Activated T-helper 2 cell treated with anti-CD3 and anti-CD28 coated beads, Interferon-gamma antibody, Interleukin-2, Interleukin-4, amounts not matched to agents 10 μg/mL and 5 μg/mL and 100 μg/mL, durations not matched to agents 14 hours and 24 hours and 36 hours (primary cell): ENCODE measurements at regions of chr5 and their contacts with region 1.

Region 1: GRCh38 chr5:102296178-102296817 is at the start of gene SLCO4C1:
- DNase-seq: peak; percentile 63
- H3K4me3 Mint-ChIP-seq: peak within 1 kb of the TSS; percentile 81
- H3K27ac Mint-ChIP-seq: peak within 1 kb of the TSS; percentile 70
- H3K4me1 Mint-ChIP-seq: peaks cover 24% of the 10 kb centered on the region
- H3K27me3 Mint-ChIP-seq: peaks cover 9% of the 10 kb centered on the region
- total RNA-seq, gene SLCO4C1: 0.50 and 0.57 TPM in 2 replicates

Region 2: GRCh38 chr5:102231693-102232619 is 64.3 kb before region 1 on chr5:
- intact Hi-C with region 1: loop called (anchors 5 kb)
- DNase-seq: no peak
- H3K4me3 Mint-ChIP-seq: no peak overlapping the region
- H3K27ac Mint-ChIP-seq: no peak overlapping the region
- H3K4me1 Mint-ChIP-seq: peaks cover 22% of the 10 kb centered on the region
- H3K27me3 Mint-ChIP-seq: peaks cover 8% of the 10 kb centered on the region

Region 3: DNA sequence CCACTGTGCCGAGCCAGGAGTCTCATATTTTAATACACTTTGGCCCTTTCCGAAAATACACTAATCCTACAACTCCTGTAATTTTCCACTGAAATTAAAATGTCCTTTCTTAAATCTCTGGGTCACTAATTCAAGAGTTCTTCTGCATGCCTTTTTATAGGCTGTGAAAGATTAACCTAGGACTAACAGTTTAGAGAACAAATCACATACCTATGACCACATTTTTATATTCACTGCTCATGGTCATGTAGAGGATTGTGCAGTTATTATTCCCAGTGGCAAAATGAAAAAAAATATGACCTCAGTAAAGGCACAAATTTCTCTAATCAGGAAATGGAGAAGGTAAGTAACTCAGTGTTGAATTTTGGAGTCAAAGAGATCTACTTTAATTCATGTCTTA is 33.6 kb before region 1 on chr5:
- intact Hi-C with region 1: no loop called
- DNase-seq: no peak
- H3K4me3 Mint-ChIP-seq: no peak overlapping the region
- H3K27ac Mint-ChIP-seq: no peak overlapping the region
- H3K4me1 Mint-ChIP-seq: no peaks in the 10 kb centered on the region
- H3K27me3 Mint-ChIP-seq: no peaks in the 10 kb centered on the region

Region 4: DNA sequence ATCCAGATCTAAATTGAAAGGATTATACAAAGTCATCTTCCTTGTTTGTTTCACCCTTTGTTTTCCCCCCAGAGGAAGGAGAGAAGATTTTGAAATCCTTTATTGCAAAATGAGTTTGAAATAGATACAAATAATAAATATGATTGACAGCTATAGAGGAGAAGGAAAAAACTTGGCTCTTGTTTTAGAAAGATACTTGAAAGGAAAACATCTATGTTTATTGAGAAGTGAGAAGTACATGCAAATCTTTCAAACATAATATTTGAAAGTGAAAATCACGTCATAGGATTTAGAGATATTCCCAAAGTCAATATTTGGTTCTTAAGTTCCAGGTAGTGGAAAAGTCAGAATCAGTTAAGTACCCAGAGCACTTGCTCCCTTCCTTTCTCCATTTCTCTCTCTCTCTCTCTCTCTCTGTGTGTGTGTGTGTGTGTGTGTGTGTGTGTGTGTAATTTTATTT is 486.0 kb after region 1 on chr5:
- intact Hi-C with region 1: no loop called
- DNase-seq: no peak
- H3K4me3 Mint-ChIP-seq: no peak overlapping the region
- H3K27ac Mint-ChIP-seq: no peak overlapping the region
- H3K4me1 Mint-ChIP-seq: peaks cover 42% of the 10 kb centered on the region
- H3K27me3 Mint-ChIP-seq: no peaks in the 10 kb centered on the region